ENCODE measurements at regions of chr17 and their contacts with region 1.

Region 1: GRCh38 chr17:29640413-29640812 is 17.7 kb upstream of the CORO6 start:
- DNase-seq: no peak
- H3K4me3 Mint-ChIP-seq: no peak overlapping the region
- H3K27ac Mint-ChIP-seq: peak overlapping the region; percentile 36
- H3K4me1 Mint-ChIP-seq: peaks cover 27% of the 10 kb centered on the region
- H3K27me3 Mint-ChIP-seq: no peaks in the 10 kb centered on the region

Region 2: GRCh38 chr17:29622337-29623282 is 17.8 kb before region 1 on chr17 and contains the start of gene CORO6:
- intact Hi-C with region 1: loop called (anchors 2 kb)
- DNase-seq: peak; percentile 56
- H3K4me3 Mint-ChIP-seq: peak within 1 kb of the TSS; percentile 80
- H3K27ac Mint-ChIP-seq: peak within 1 kb of the TSS; percentile 81
- H3K4me1 Mint-ChIP-seq: peaks cover 41% of the 10 kb centered on the region
- H3K27me3 Mint-ChIP-seq: no peaks in the 10 kb centered on the region
- total RNA-seq, gene CORO6: 5.1 and 6.4 TPM in 2 replicates

Region 3: GRCh38 chr17:29664743-29665480 is 24.5 kb after region 1 on chr17:
- intact Hi-C with region 1: no loop called
- DNase-seq: no peak
- H3K4me3 Mint-ChIP-seq: no peak overlapping the region
- H3K27ac Mint-ChIP-seq: peak overlapping the region; percentile 46
- H3K4me1 Mint-ChIP-seq: peaks cover 31% of the 10 kb centered on the region
- H3K27me3 Mint-ChIP-seq: no peaks in the 10 kb centered on the region

Region 4: DNA sequence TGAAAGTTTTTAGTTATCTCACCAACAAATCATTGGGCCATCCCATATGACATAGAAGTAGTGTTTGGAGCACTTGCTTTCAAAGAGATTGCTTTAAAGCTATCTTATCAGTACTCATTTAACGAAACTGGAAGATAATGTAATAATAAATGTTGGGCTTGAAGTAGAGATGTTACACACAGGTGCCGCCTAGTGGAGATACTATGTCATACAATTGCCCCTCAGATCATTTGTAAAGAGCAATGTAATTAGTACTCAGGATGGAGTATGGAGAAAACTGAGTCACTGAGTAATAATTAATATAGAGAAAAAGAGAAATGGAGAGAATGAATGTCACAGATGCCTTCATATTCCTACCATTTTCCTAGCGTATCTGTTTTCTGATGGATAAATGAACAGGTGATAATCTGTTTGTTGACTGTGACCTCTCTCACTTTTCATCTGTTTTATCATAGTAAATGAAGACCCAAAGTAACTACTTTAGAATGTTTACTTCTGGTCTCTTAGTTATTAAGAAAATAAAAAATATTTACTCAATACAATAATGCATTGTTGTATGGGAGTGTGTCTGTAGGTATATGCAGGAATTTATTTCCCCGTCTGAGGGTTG is 381.4 kb after region 1 on chr17:
- intact Hi-C with region 1: loop called (anchors 5 kb)
- DNase-seq: peak; percentile 16
- H3K4me3 Mint-ChIP-seq: no peak overlapping the region
- H3K27ac Mint-ChIP-seq: no peak overlapping the region
- H3K4me1 Mint-ChIP-seq: no peaks in the 10 kb centered on the region
- H3K27me3 Mint-ChIP-seq: peaks cover 11% of the 10 kb centered on the region

Measured in activated T-helper 1 cell treated with anti-CD3 and anti-CD28 coated beads, Interleukin-12 subunit alpha, Interleukin-12 subunit beta, Interleukin-2, Interleukin-4 antibody, amounts not matched to agents 30 ng/mL and 10 ng/mL and 1 ng/mL, durations not matched to agents 14 hours and 24 hours and 36 hours (primary cell).